Activated T-helper 2 cell treated with anti-CD3 and anti-CD28 coated beads, Interferon-gamma antibody, Interleukin-2, Interleukin-4, amounts not matched to agents 10 μg/mL and 5 μg/mL and 100 μg/mL, durations not matched to agents 14 hours and 24 hours and 36 hours (primary cell): ENCODE measurements at regions of chr4 and their contacts with region 1.

Region 1: DNA sequence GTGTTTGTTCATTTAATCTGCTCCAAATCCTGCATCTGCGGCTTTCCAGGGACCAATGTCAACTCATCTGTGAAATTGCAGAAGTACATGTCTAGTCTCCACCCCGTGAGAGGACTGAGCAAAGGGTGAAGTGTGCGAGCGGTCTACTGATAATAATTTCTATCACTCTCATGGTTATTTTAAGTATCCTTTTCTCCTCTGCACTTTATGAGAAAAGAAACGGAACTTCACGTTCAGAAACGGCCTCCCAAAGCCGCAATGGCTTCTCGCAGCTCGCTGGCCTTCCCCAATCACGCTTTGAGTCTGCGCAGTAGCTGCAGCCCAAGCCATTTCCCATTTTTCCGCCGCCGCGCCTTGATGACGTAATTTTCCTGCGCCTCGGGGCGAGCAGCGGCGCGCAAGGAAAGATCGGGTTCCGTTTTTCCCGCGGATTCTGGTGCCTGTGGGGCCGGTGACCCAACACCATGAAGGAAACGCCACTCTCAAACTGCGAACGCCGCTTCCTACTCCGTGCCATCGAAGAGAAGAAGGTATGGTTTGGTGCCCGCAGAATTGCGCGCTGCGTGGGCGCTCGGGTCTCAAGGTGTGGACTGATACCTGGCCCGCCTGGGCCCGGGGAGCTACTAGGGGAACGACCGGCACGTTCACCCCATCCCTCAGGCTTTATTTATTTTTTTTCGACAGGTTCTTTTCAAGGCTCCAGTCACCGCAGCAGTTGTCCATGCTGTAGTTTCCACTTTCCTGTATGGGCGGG is at the start of gene EXOSC9:
- DNase-seq: peak; percentile 92
- H3K4me3 Mint-ChIP-seq: peak within 1 kb of the TSS; percentile 85
- H3K27ac Mint-ChIP-seq: peak within 1 kb of the TSS; percentile 93
- H3K4me1 Mint-ChIP-seq: peaks cover 38% of the 10 kb centered on the region
- H3K27me3 Mint-ChIP-seq: no peaks in the 10 kb centered on the region
- total RNA-seq, gene EXOSC9: 62.1 and 65.9 TPM in 2 replicates

Region 2: DNA sequence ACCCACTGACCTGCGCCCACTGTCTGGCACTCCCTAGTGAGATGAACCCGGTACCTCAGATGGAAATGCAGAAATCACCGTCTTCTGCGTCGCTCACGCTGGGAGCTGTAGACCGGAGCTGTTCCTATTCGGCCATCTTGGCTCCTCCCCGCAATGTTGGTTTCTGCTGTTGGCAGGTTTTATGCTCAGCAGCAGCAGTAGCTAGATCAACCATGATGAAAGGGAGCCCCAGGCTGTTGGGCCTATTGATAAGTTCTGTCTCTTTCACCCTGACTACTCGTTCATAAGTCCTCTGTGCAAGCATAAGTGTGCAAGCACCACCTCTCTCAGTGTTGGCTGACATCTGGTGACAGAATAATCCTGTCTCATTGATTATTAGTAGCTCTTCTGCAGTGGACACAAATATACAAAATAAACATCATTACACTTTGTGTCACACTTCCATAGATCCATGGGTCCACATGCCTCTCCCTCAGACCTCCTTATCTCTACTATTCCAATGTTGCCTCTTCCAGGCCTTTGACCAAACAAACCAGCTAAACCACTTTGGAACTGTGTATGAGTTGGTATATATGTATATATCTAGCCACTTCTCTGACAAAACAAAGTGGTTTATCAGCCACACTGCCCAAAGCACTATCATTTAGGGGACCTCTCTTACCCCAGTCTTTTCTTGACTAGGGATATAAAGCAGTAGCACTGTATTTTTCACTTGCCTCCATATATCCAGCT is 1152.6 kb before region 1 on chr4:
- intact Hi-C with region 1: no loop called
- DNase-seq: no peak
- H3K4me3 Mint-ChIP-seq: no peak overlapping the region
- H3K27ac Mint-ChIP-seq: no peak overlapping the region
- H3K4me1 Mint-ChIP-seq: no peaks in the 10 kb centered on the region
- H3K27me3 Mint-ChIP-seq: no peaks in the 10 kb centered on the region

Region 3: DNA sequence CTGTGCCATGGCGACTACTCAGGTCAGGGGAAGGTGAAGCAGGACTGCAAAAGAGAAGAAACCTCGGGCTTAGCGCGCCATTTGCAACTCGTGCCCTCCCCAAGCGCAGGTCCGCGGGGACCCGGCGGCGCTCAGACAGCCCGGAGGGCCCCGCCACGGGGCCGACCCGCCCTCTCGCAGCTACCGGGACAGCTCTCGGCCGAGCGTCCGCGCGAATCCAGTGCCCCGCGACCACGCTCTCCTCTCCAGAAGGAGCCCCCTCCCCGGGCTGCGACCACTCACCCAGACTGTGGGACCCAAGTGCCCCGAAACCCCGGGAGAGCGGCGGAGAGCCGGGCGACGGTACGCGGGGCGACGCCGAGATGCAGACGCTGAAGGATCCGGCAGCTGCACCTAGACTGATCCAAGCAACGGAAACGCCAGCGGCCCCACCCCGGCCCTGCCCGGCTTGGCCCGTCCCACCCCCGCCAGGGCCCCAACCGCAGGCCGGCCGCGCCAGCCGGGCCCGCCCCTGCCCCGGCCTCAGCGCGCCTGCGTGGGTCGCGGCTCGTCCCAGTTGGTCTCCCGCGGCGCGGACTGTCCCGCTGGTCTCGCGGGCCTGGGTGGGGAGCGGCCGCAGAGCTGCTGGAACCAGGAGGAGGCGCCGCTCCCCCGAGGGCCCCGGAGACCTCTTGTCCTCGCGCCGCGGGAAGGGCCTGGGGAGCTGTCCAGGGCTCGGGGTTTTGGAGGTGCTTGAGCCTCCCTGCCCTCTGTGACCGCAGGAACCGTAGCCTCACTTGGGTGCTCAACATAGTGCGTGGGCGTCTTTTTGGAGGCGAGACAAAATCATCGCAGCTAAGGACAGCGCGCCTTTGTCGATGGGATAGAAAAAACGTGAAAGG is 104.3 kb before region 1 on chr4 and contains the start of gene ANXA5:
- intact Hi-C with region 1: loop called (anchors 5 kb)
- DNase-seq: peak; percentile 73
- H3K4me3 Mint-ChIP-seq: peak within 1 kb of the TSS; percentile 97
- H3K27ac Mint-ChIP-seq: peak within 1 kb of the TSS; percentile 97
- H3K4me1 Mint-ChIP-seq: peaks cover 35% of the 10 kb centered on the region
- H3K27me3 Mint-ChIP-seq: peaks cover 41% of the 10 kb centered on the region
- total RNA-seq, gene ANXA5: 105 and 107 TPM in 2 replicates

Region 4: DNA sequence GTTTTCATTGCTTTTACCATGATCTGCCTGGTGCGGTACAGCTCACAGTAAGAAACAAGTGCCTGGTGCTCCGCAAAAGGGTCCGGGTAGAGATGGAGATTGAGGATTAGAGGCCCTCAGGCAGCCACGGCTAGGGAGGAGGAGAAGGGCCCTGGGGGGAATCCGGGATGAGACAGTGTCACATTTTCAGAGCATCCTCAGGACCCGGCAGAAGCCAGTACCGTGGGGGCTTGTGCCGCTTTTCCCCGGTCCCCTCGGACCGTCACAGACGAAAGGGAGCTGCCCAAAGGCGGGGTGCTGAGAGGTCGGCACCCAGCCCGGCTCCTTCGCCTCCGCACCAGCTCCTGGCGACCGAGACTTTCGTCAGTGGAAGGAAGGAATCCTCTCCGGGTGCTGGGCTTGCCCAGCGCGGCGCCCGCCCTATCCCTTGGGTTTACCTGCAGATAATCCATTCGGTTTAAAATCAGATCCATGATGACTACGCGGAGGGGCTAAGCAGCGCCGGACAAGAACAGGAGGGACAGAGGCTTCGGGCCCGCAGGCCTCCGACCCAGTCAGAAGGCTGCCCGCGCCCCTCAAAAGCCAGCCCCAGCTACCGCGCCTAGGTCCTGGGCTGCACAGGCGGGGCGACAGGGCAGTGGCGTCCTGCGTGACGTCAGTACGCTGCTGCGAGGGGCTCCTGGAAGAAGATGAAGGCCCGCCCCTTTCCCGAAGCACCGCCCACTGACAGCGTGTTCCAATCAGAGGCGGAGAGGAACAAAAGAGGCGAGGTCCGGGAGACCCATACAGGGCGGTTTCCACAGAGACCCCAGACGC is 68.9 kb after region 1 on chr4 and contains the start of gene BBS7:
- intact Hi-C with region 1: loop called (anchors 1 kb)
- DNase-seq: peak; percentile 92
- H3K4me3 Mint-ChIP-seq: peak within 1 kb of the TSS; percentile 96
- H3K27ac Mint-ChIP-seq: peak within 1 kb of the TSS; percentile 80
- H3K4me1 Mint-ChIP-seq: peaks cover 16% of the 10 kb centered on the region
- H3K27me3 Mint-ChIP-seq: peaks cover 17% of the 10 kb centered on the region
- total RNA-seq, gene BBS7: 17.5 and 18.5 TPM in 2 replicates

Region 5: GRCh38 chr4:121964958-121965357 is 163.8 kb after region 1 on chr4:
- intact Hi-C with region 1: no loop called
- DNase-seq: no peak
- H3K4me3 Mint-ChIP-seq: no peak overlapping the region
- H3K27ac Mint-ChIP-seq: no peak overlapping the region
- H3K4me1 Mint-ChIP-seq: no peaks in the 10 kb centered on the region
- H3K27me3 Mint-ChIP-seq: peaks cover 33% of the 10 kb centered on the region